Pancreas (tissue), 10 donors: ENCODE measurements at regions of chr7 and their contacts with region 1.

Region 1: DNA sequence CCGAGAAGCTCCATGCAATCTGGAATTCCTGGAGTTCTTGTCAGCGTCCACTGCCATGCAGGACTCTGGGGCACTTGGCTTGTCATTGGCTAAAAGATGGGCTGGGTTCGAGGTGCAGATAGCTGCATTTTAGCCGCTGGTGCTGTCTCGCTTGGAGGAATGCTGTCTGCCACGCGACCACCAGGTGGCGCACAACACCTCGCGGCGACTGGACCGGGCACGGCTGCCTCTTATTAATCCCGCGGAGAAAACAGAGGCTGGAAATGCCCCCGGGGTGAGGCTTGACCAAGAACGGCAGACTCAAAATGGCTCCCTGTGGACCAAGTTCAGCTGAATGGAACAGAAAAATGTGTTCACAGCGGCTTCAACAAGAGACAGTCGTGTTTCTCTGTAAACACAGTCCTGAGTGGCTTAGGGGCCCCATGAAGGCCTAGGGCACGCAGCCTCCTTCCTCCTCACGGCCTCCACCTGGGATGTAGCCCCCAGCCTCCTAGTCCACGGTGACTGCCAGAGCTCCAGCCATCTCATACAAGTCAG is 46.2 kb downstream of the AOC1 start:
- DNase-seq: peak; percentile 54 to 94 (median 78)
- ATAC-seq: peak; percentile 75 to 86 (median 82)
- H3K4me3 ChIP-seq: no peak overlapping the region
- H3K27ac ChIP-seq: no peak overlapping the region
- H3K4me1 ChIP-seq: no peaks in the 10 kb centered on the region
- H3K27me3 ChIP-seq: no peaks in the 10 kb centered on the region
- CTCF ChIP-seq: peak; percentile 87 to 94 (median 90)

Region 2: DNA sequence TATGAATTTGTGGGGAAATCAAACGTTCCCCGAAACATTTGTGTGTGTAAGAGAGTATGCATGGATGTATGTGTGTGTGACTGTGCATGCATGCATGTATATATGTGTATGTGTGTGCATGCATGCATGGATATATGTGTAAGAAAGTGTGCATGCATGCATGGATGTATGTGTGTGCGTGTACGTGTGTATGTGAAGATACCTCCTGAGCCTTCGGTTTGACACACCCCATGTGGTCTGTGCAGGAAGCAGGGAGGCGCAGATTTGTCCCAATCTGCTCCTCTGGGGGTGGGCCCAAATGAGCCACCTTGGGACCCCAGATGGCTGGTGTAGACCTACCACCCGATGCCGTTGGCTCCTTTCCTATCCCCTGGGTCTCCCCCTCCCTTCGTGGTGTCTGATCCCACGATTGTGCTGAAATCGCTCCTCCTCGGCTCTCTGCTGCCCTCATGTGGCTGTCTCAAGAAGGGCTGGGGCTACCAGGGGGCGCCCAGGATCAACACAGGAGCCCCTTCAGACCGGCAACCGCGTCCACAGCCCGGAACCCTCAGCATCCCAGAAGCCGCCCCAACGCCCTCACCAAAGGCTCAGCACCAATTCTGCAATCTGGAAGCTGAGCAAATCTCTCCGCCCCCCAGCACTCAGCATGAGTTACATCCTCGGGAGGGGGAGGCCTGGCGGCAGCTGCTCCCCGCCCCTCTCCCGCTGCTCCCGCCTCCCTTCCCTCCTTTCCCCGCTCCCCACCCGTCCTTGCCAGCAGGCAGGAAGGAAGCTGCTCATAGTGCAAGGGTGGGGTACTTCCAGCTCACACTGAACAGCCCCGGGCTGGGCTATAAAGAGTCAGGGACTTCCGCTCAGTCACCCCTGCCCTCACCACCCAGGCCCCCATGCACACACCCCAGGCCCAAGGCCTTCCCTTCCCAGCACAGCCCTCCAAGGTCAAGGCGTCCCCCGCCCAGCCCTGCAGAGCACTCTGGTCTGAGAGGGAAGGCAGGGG is 90.0 kb after region 1 on chr7:
- intact Hi-C with region 1: loop called (anchors 5 to 10 kb)
- DNase-seq: peak in 3 of 6 donors; percentile 45 to 59 (median 49)
- ATAC-seq: peak; percentile 36 to 67 (median 56)
- H3K4me3 ChIP-seq: no peak overlapping the region
- H3K27ac ChIP-seq: no peak overlapping the region
- H3K4me1 ChIP-seq: no peaks in the 10 kb centered on the region
- H3K27me3 ChIP-seq: peaks cover 0 to 12% (median 0%) of the 10 kb centered on the region in 4 donors
- CTCF ChIP-seq: peak; percentile 67 to 72 (median 70)